Naive thymus-derived CD4-positive, alpha-beta T cell (primary cell): ENCODE measurements at regions of chr5 and their contacts with region 1.

Region 1: GRCh38 chr5:87400305-87400899 is 12.3 kb downstream of the CCNH start:
- DNase-seq: peak in 6 of 9 donors; percentile 30 to 66 (median 52)
- ATAC-seq: peak; percentile 87
- H3K4me3 ChIP-seq: no peak overlapping the region
- H3K4me3 Mint-ChIP-seq: peak overlapping the region in 1 of 10 donors; percentile 34
- H3K27ac ChIP-seq: peak overlapping the region; percentile 43
- H3K27ac Mint-ChIP-seq: peak overlapping the region in 7 of 9 donors; percentile 17 to 75 (median 69)
- H3K4me1 ChIP-seq: peaks cover 11 to 15% of the 10 kb centered on the region in 2 donors
- H3K4me1 Mint-ChIP-seq: peaks cover 13 to 48% (median 28%) of the 10 kb centered on the region in 7 donors
- H3K27me3 ChIP-seq: no peaks in the 10 kb centered on the region
- H3K27me3 Mint-ChIP-seq: no peaks in the 10 kb centered on the region

Region 2: GRCh38 chr5:86880785-86881492 is 519.5 kb before region 1 on chr5:
- CTCF ChIA-PET with region 1: interaction called, 4 read pairs
- POLR2A ChIA-PET with region 1: no interaction called
- intact Hi-C with region 1: loop called (anchors 1 kb)
- DNase-seq: peak in 8 of 9 donors; percentile 11 to 45 (median 28)
- ATAC-seq: peak; percentile 86
- H3K4me3 ChIP-seq: no peak overlapping the region
- H3K4me3 Mint-ChIP-seq: no peak overlapping the region
- H3K27ac ChIP-seq: no peak overlapping the region
- H3K27ac Mint-ChIP-seq: no peak overlapping the region
- H3K4me1 ChIP-seq: no peaks in the 10 kb centered on the region
- H3K4me1 Mint-ChIP-seq: no peaks in the 10 kb centered on the region
- H3K27me3 ChIP-seq: no peaks in the 10 kb centered on the region
- H3K27me3 Mint-ChIP-seq: peaks cover 0 to 19% (median 7%) of the 10 kb centered on the region in 5 donors

Region 3: GRCh38 chr5:86986837-86987236 is 413.6 kb before region 1 on chr5:
- CTCF ChIA-PET with region 1: interaction called, 20 read pairs
- POLR2A ChIA-PET with region 1: no interaction called
- intact Hi-C with region 1: loop called (anchors 1 to 5 kb)
- DNase-seq: peak in 1 of 9 donors; percentile 4
- ATAC-seq: no peak
- H3K4me3 ChIP-seq: no peak overlapping the region
- H3K4me3 Mint-ChIP-seq: no peak overlapping the region
- H3K27ac ChIP-seq: no peak overlapping the region
- H3K27ac Mint-ChIP-seq: no peak overlapping the region
- H3K4me1 ChIP-seq: no peaks in the 10 kb centered on the region
- H3K4me1 Mint-ChIP-seq: no peaks in the 10 kb centered on the region
- H3K27me3 ChIP-seq: no peaks in the 10 kb centered on the region
- H3K27me3 Mint-ChIP-seq: peaks cover 0 to 20% (median 0%) of the 10 kb centered on the region in 5 donors

Region 4: GRCh38 chr5:87048156-87048555 is 352.2 kb before region 1 on chr5:
- CTCF ChIA-PET with region 1: no interaction called
- POLR2A ChIA-PET with region 1: no interaction called
- intact Hi-C with region 1: loop called in 1 of 2 experiments (anchors 1 kb)
- DNase-seq: no peak
- ATAC-seq: no peak
- H3K4me3 ChIP-seq: no peak overlapping the region
- H3K4me3 Mint-ChIP-seq: no peak overlapping the region
- H3K27ac ChIP-seq: no peak overlapping the region
- H3K27ac Mint-ChIP-seq: no peak overlapping the region
- H3K4me1 ChIP-seq: no peaks in the 10 kb centered on the region
- H3K4me1 Mint-ChIP-seq: peaks cover 0 to 2% (median 0%) of the 10 kb centered on the region in 7 donors
- H3K27me3 ChIP-seq: no peaks in the 10 kb centered on the region
- H3K27me3 Mint-ChIP-seq: peaks cover 0 to 8% (median 0%) of the 10 kb centered on the region in 5 donors

Region 5: GRCh38 chr5:87383216-87383615 is 17.2 kb before region 1 on chr5:
- CTCF ChIA-PET with region 1: interaction called, 3 read pairs
- POLR2A ChIA-PET with region 1: no interaction called
- intact Hi-C with region 1: loop called in 1 of 2 experiments (anchors 2 kb)
- DNase-seq: no peak
- ATAC-seq: no peak
- H3K4me3 ChIP-seq: no peak overlapping the region
- H3K4me3 Mint-ChIP-seq: no peak overlapping the region
- H3K27ac ChIP-seq: no peak overlapping the region
- H3K27ac Mint-ChIP-seq: peak overlapping the region in 3 of 9 donors; percentile 19 to 70 (median 68)
- H3K4me1 ChIP-seq: no peaks in the 10 kb centered on the region
- H3K4me1 Mint-ChIP-seq: peaks cover 0 to 29% (median 21%) of the 10 kb centered on the region in 7 donors
- H3K27me3 ChIP-seq: no peaks in the 10 kb centered on the region
- H3K27me3 Mint-ChIP-seq: no peaks in the 10 kb centered on the region

Region 6: GRCh38 chr5:87421307-87421706 is 20.9 kb after region 1 on chr5:
- CTCF ChIA-PET with region 1: no interaction called
- POLR2A ChIA-PET with region 1: no interaction called
- intact Hi-C with region 1: no loop called
- DNase-seq: no peak
- ATAC-seq: no peak
- H3K4me3 ChIP-seq: no peak overlapping the region
- H3K4me3 Mint-ChIP-seq: no peak overlapping the region
- H3K27ac ChIP-seq: no peak overlapping the region
- H3K27ac Mint-ChIP-seq: no peak overlapping the region
- H3K4me1 ChIP-seq: no peaks in the 10 kb centered on the region
- H3K4me1 Mint-ChIP-seq: no peaks in the 10 kb centered on the region
- H3K27me3 ChIP-seq: no peaks in the 10 kb centered on the region
- H3K27me3 Mint-ChIP-seq: peaks cover 0 to 3% (median 0%) of the 10 kb centered on the region in 5 donors